ENCODE measurements at regions of chr17 and their contacts with region 1.

Region 1: GRCh38 chr17:8846768-8847211 is 20.7 kb downstream of the PIK3R6 start:
- DNase-seq: peak in 3 of 5 donors; percentile 34 to 46 (median 44)
- ATAC-seq: peak; percentile 89 to 96 (median 93)
- H3K4me3 ChIP-seq: no peak overlapping the region
- H3K27ac ChIP-seq: peak overlapping the region in 11 of 12 donors; percentile 34 to 89 (median 71)
- H3K4me1 ChIP-seq: peaks cover 0 to 36% (median 8%) of the 10 kb centered on the region in 12 donors
- H3K27me3 ChIP-seq: no peaks in the 10 kb centered on the region
- CTCF ChIP-seq: no peak
- POLR2A ChIP-seq: no peak

Region 2: GRCh38 chr17:8887834-8888703 is 41.3 kb after region 1 on chr17:
- intact Hi-C with region 1: loop called in 1 of 10 experiments (anchors 5 kb)
- DNase-seq: peak; percentile 44 to 80 (median 57)
- ATAC-seq: peak; percentile 60 to 92 (median 73)
- H3K4me3 ChIP-seq: no peak overlapping the region
- H3K27ac ChIP-seq: peak overlapping the region in 4 of 12 donors; percentile 10 to 46 (median 36)
- H3K4me1 ChIP-seq: peaks cover 0 to 14% (median 4%) of the 10 kb centered on the region in 12 donors
- H3K27me3 ChIP-seq: no peaks in the 10 kb centered on the region
- CTCF ChIP-seq: peak in 11 of 12 donors; percentile 24 to 60 (median 44)
- POLR2A ChIP-seq: no peak